Aorta (tissue), 5 donors: ENCODE measurements at regions of chr6 and their contacts with region 1.

Region 1: GRCh38 chr6:25788305-25788922 is 33.9 kb downstream of the SLC17A4 start:
- DNase-seq: peak in 1 of 2 donors; percentile 63
- ATAC-seq: peak; percentile 26
- H3K4me3 ChIP-seq: no peak overlapping the region
- H3K27ac ChIP-seq: no peak overlapping the region
- H3K4me1 ChIP-seq: no peaks in the 10 kb centered on the region
- H3K27me3 ChIP-seq: no peaks in the 10 kb centered on the region

Region 2: GRCh38 chr6:25889877-25890853 is 101.8 kb after region 1 on chr6:
- intact Hi-C with region 1: loop called (anchors 2 to 5 kb)
- DNase-seq: no peak
- ATAC-seq: peak; percentile 65
- H3K4me3 ChIP-seq: no peak overlapping the region
- H3K27ac ChIP-seq: no peak overlapping the region
- H3K4me1 ChIP-seq: no peaks in the 10 kb centered on the region
- H3K27me3 ChIP-seq: no peaks in the 10 kb centered on the region

Region 3: GRCh38 chr6:25942561-25943147 is 154.2 kb after region 1 on chr6:
- intact Hi-C with region 1: loop called in 1 of 2 experiments (anchors 5 kb)
- DNase-seq: no peak
- ATAC-seq: no peak
- H3K4me3 ChIP-seq: no peak overlapping the region
- H3K27ac ChIP-seq: no peak overlapping the region
- H3K4me1 ChIP-seq: no peaks in the 10 kb centered on the region
- H3K27me3 ChIP-seq: no peaks in the 10 kb centered on the region

Region 4: DNA sequence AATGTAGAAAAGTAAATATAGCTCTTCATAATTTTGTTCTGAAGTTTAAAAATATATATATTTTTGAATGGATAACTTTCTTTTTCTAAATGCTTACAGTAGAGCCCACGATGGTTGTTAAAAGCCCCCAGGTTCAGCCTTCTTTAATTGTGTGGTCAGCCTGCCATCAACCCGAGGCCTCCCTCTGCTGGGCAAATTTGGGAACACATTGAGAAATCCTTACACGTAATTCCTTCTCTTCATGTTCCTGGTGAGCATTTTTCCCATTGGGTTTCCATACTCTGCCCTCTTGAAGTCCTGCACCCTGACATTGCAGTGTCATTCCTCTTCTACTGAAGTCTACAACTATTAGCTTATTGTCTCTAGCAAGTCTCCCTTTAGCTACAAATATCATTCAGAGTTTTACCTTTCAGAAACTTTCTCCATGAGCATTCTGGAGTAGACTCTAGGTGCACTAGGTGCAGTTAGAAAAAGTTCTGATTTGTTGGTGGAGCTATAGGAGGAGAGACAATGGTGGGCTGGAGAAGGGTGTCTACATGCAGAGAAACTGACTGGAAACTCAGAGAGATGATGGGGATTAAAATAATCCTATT is 214.8 kb after region 1 on chr6:
- intact Hi-C with region 1: loop called in 1 of 2 experiments (anchors 5 kb)
- DNase-seq: peak in 1 of 2 donors; percentile 56
- ATAC-seq: no peak
- H3K4me3 ChIP-seq: no peak overlapping the region
- H3K27ac ChIP-seq: no peak overlapping the region
- H3K4me1 ChIP-seq: peaks cover 0 to 3% of the 10 kb centered on the region in 2 donors
- H3K27me3 ChIP-seq: no peaks in the 10 kb centered on the region